Astrocyte of the cerebellum (primary cell): ENCODE measurements at regions of chr1 and their contacts with region 1.

Region 1: GRCh38 chr1:100077531-100077930 is 55.2 kb downstream of the SASS6 start:
- DNase-seq: peak; percentile 78
- H3K4me3 ChIP-seq: no peak overlapping the region
- CTCF ChIP-seq: no peak

Region 2: GRCh38 chr1:100132566-100133477 is 55.3 kb after region 1 on chr1 and contains the starts of genes SASS6 and TRMT13:
- in situ Hi-C with region 1: loop called (anchors 5 kb)
- DNase-seq: peak; percentile 97
- H3K4me3 ChIP-seq: peak within 1 kb of the TSS; percentile 98
- CTCF ChIP-seq: no peak